ENCODE measurements at regions of chr7 and their contacts with region 1.

Region 1: GRCh38 chr7:130084037-130084875 is 13.9 kb downstream of the KLHDC10 start:
- DNase-seq: no peak
- H3K4me3 Mint-ChIP-seq: no peak overlapping the region
- H3K27ac Mint-ChIP-seq: no peak overlapping the region
- H3K4me1 Mint-ChIP-seq: peaks cover 5% of the 10 kb centered on the region
- H3K27me3 Mint-ChIP-seq: no peaks in the 10 kb centered on the region

Region 2: DNA sequence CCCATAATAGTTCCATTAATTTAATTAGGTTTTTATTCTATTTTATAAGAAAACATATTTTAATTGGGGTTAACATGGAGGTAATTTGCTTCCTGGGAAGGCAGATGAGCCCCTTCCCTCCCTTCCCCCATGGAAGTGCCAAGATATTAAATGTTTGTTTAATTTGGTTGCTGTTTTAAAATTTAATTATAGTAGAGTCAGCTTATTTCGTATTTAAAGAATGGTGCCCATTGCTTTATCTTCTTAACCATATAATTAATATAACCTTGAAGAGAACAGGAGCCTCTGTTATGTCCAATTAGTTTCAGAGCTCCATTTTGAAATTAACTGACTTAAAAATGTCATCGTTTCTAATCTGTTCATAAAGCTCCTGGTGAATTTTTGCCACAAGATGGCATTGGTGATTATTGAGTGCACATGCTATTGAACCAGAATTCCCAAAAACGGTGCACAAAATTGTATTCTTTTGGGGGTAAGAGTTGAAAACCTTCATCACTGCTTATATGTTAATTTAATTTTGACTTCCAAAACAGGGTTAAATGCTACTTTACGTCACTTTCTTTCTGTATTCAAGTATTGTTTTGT is 12.1 kb after region 1 on chr7:
- CTCF ChIA-PET with region 1: interaction called, 10 read pairs
- POLR2A ChIA-PET with region 1: no interaction called
- DNase-seq: no peak
- H3K4me3 Mint-ChIP-seq: no peak overlapping the region
- H3K27ac Mint-ChIP-seq: no peak overlapping the region
- H3K4me1 Mint-ChIP-seq: peaks cover 1% of the 10 kb centered on the region
- H3K27me3 Mint-ChIP-seq: no peaks in the 10 kb centered on the region

Region 3: DNA sequence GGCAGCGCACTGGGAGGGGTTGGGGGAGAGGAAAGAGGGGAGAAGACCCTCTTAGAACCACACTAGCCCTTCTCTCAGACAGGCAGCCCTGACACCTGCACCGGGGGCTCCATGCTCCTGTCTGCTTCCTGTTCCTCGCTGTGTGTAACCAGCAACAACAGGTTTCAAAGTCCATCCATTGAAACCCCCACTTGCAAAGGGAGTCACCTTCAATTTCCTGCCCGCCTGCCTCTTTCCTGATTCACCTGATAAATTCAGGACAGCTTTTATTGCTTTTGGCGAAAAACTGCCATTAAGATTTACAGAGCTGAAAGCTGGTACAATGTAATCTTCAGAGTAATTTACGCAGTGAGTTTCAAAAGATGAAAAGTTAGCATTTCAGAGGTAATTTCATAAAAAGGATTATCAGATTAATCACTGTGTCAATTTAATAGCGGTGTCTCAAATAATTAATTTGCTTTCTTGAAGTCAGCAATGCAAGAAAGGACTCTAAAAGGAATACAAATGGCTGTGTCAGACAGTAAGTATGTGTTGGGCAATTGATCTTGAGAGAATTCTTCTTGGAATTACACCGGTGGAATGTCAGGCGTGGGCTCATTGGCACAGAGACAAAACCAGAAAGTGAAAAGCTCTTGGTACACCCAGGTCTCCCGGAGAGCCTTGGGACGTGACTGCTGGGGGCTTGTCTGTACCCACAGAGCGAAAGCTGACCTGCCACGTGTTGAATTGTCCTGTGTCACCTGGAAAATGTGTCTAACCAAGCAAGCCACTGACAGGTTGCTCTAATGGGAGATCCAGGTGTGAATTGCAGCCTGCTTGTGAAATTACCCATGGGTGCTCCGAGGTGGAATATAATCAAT is 60.3 kb after region 1 on chr7:
- CTCF ChIA-PET with region 1: no interaction called
- POLR2A ChIA-PET with region 1: no interaction called
- DNase-seq: peak; percentile 8
- H3K4me3 Mint-ChIP-seq: no peak overlapping the region
- H3K27ac Mint-ChIP-seq: no peak overlapping the region
- H3K4me1 Mint-ChIP-seq: peaks cover 5% of the 10 kb centered on the region
- H3K27me3 Mint-ChIP-seq: peaks cover 9% of the 10 kb centered on the region

Measured in activated CD4-positive, alpha-beta memory T cell treated with anti-CD3 and anti-CD28 coated beads, Interleukin-2, amount 10 ng/mL, durations not matched to agents 7 days and 5 days (primary cell).